Endothelial cell of umbilical vein (primary cell): ENCODE measurements at regions of chr1 and their contacts with region 1.

Region 1: GRCh38 chr1:58546520-58547308 is at the start of gene OMA1:
- DNase-seq: peak; percentile 99
- H3K4me3 ChIP-seq: peak within 1 kb of the TSS; percentile 73 to 95 (median 76)
- H3K27ac ChIP-seq: peak within 1 kb of the TSS; percentile 84
- H3K4me1 ChIP-seq: peaks cover 4% of the 10 kb centered on the region
- H3K27me3 ChIP-seq: peaks cover 3 to 4% of the 10 kb centered on the region in 2 experiments
- CTCF ChIP-seq: peak; percentile 99
- POLR2A ChIP-seq: peak; percentile 76
- total RNA-seq, gene OMA1: 4.6 and 7.7 TPM in 2 replicates

Region 2: GRCh38 chr1:56967900-56968832 is 1578.5 kb before region 1 on chr1:
- CTCF ChIA-PET with region 1: no interaction called
- POLR2A ChIA-PET with region 1: no interaction called
- dilution Hi-C with region 1: no loop called
- intact Hi-C with region 1: loop called (anchors 5 kb)
- DNase-seq: peak; percentile 6
- H3K4me3 ChIP-seq: no peak overlapping the region
- H3K27ac ChIP-seq: no peak overlapping the region
- H3K4me1 ChIP-seq: no peaks in the 10 kb centered on the region
- H3K27me3 ChIP-seq: no peaks in the 10 kb centered on the region
- CTCF ChIP-seq: peak; percentile 37 to 56
- POLR2A ChIP-seq: no peak

Region 3: DNA sequence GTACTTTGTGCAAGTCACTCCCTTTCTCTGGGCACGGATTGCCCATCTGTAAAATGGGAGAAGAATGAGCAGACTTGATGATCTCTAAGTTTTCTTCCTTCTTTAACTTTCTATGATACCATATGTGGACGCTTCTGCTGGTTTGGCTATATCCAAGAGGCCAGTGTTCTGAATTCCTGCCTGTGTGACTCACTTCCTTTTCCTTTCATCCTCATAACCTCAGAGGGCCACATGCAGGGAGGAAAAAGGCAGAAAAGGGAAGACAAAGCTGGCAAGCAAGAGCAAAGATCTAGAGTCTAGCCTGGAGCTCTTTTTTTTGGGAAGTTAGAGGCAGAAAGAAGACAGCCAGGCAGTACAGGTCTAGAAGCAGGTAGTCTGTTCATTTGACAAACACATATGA is 151.4 kb before region 1 on chr1:
- CTCF ChIA-PET with region 1: no interaction called
- POLR2A ChIA-PET with region 1: no interaction called
- dilution Hi-C with region 1: no loop called
- intact Hi-C with region 1: loop called (anchors 10 kb)
- DNase-seq: peak; percentile 78
- H3K4me3 ChIP-seq: no peak overlapping the region
- H3K27ac ChIP-seq: peak overlapping the region; percentile 84
- H3K4me1 ChIP-seq: peaks cover 25% of the 10 kb centered on the region
- H3K27me3 ChIP-seq: no peaks in the 10 kb centered on the region
- CTCF ChIP-seq: no peak
- POLR2A ChIP-seq: no peak

Region 4: DNA sequence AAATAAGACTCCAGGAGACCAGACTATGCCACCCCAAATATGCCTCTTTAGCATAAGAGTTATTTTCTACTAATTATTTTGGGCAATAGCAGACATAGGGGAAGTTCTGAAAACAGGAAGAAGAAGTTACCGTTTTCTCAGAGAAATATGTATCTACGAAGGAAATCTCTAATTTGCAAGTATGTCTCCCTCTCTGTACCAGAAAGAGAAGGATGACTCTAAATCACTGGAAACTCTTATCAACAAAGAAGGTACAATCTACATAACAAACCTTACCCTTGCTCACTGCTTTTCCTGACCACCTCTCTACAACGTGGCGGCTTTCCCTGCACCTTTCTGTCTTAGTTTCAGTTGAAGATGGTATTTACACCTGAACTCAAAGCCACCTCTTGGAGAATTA is 49.2 kb before region 1 on chr1:
- CTCF ChIA-PET with region 1: no interaction called
- POLR2A ChIA-PET with region 1: no interaction called
- dilution Hi-C with region 1: no loop called
- intact Hi-C with region 1: no loop called
- DNase-seq: no peak
- H3K4me3 ChIP-seq: no peak overlapping the region
- H3K27ac ChIP-seq: no peak overlapping the region
- H3K4me1 ChIP-seq: no peaks in the 10 kb centered on the region
- H3K27me3 ChIP-seq: no peaks in the 10 kb centered on the region
- CTCF ChIP-seq: no peak
- POLR2A ChIP-seq: no peak

Region 5: DNA sequence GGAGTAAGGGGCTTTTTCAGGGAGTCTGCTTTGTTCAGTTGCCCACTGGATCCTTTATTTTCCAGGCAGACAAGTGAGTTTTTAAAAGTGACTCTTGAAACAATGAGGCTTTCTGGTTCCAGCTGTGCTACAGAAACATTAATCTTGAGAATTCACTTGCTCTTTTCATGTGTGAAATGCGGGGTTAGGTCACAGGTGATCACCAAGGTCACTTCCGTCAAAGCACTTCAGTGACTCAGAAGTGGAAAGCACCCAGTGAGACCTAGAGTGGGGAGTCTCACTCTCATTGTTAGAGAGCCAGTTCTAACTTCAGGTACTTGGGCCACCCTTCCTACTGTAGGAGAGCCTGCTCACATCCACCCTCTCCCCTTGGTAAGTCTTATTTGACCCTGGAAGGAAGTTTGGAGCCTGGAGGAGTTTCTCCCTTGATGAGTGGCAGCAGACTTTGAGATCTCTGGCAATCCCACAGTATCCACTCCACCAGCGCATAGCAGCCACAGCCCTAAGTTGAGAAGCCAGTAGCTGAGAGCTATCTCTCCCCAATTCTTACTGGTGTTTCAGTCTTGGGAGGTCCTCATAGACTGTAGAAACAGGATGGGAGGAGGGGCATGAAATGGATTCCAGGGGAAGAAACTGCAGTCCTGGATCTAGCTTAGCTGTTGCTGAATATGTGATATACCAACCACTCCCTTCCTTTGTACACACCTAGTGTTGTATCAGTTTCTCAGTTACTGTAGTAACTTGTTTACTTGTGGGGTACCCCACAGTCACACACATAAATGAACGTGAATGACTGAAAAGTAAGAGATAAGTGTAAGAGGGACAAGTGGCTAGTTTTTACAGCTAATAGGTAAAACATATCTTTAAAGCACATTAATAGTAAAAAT is 27.2 kb after region 1 on chr1:
- CTCF ChIA-PET with region 1: interaction called, 9 read pairs
- POLR2A ChIA-PET with region 1: interaction called, 3 read pairs
- dilution Hi-C with region 1: no loop called
- intact Hi-C with region 1: loop called (anchors 1 kb)
- DNase-seq: peak; percentile 68
- H3K4me3 ChIP-seq: no peak overlapping the region
- H3K27ac ChIP-seq: no peak overlapping the region
- H3K4me1 ChIP-seq: peaks cover 22% of the 10 kb centered on the region
- H3K27me3 ChIP-seq: no peaks in the 10 kb centered on the region
- CTCF ChIP-seq: no peak
- POLR2A ChIP-seq: no peak

Region 6: DNA sequence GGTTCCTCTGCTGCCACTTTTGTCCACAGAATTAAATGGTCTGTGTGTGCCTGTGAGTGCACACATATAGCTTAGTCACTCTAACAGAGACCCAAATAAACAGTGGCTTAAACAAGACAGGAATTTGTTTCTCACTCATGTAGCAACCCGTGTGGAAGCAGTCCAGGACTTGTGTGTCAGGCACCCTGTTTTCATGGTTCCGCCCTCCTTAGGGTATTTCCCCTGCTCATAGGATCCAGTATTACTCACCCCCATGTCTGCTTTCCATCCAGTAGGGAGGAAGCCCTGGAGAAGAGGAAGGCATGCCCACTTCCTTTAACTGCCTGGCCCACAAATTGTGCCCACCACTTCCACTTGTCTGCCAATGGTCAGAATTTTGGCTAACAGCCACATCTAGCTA is 71.6 kb after region 1 on chr1:
- CTCF ChIA-PET with region 1: interaction called, 10 read pairs
- POLR2A ChIA-PET with region 1: interaction called, 5 read pairs
- dilution Hi-C with region 1: no loop called
- intact Hi-C with region 1: loop called (anchors 1 kb)
- DNase-seq: peak; percentile 96
- H3K4me3 ChIP-seq: no peak overlapping the region
- H3K27ac ChIP-seq: peak overlapping the region; percentile 77
- H3K4me1 ChIP-seq: peaks cover 32% of the 10 kb centered on the region
- H3K27me3 ChIP-seq: no peaks in the 10 kb centered on the region
- CTCF ChIP-seq: no peak
- POLR2A ChIP-seq: no peak

Region 7: DNA sequence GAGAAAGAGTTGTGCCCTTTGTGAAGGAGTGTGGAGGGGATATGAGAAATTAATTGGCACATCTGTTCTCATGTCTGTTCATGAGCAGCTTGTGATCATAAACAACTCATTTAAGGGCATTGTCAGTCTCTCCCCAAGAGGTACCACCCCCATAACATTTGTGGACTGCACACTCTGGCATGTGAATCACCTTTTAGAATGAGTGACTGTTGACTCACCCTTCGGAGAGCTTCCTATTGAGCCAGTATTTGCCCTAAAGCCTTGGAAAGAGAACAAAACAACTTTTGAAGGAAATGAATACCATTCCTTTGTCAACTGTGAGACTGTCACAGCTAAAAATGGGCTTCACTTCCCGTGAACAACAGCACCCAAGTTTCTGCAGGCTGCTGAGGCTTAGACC is 180.6 kb after region 1 on chr1:
- CTCF ChIA-PET with region 1: no interaction called
- POLR2A ChIA-PET with region 1: no interaction called
- dilution Hi-C with region 1: no loop called
- intact Hi-C with region 1: loop called (anchors 1 kb)
- DNase-seq: peak; percentile 97
- H3K4me3 ChIP-seq: no peak overlapping the region
- H3K27ac ChIP-seq: peak overlapping the region; percentile 88
- H3K4me1 ChIP-seq: peaks cover 19% of the 10 kb centered on the region
- H3K27me3 ChIP-seq: no peaks in the 10 kb centered on the region
- CTCF ChIP-seq: no peak
- POLR2A ChIP-seq: no peak